ENCODE measurements at regions of chr17 and their contacts with region 1.

Region 1: DNA sequence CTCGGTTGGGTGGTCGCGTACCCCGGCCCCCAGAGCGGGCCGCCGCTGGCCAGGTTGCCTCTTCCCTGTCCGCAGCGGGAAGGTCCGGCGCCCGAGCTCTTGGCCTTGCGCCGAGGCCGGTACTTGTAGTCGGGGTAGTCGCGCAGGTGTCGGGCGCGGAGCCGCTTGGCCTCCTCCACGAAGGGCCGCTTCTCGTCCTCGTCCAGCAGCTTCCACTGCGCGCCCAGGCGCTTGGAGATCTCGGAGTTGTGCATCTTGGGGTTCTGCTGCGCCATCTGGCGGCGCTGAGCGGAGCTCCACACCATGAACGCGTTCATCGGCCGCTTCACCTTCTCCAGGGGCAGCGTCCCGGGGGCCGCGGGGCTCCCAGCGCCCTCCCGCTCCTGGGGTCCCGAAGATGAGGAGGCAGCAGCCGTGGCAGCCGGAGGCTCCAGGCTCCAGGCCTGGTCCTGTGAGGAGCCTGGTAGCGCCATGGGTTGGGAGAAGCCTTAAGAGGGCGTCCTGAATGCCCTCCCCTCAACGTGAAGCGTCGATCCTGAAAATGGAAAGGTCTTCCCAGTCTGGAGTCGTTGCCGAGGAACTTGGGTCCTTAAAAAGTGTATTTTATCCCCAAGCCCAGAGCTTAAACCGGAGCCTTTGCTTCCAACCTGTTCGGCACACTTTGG is 558 bp downstream of the SOX15 start:
- DNase-seq: peak; percentile 72 to 88
- H3K4me3 ChIP-seq: peak overlapping the region; percentile 83
- H3K27ac ChIP-seq: peak overlapping the region; percentile 97
- H3K4me1 ChIP-seq: peaks cover 39% of the 10 kb centered on the region
- H3K27me3 ChIP-seq: no peaks in the 10 kb centered on the region
- CTCF ChIP-seq: peak; percentile 83

Region 2: GRCh38 chr17:7280519-7281429 is 308.6 kb before region 1 on chr17:
- CTCF ChIA-PET with region 1: no interaction called
- POLR2A ChIA-PET with region 1: no interaction called
- intact Hi-C with region 1: loop called (anchors 2 kb)
- DNase-seq: peak; percentile 74 to 91
- H3K4me3 ChIP-seq: peak overlapping the region; percentile 55
- H3K27ac ChIP-seq: peak overlapping the region; percentile 62
- H3K4me1 ChIP-seq: 0 out of 2 replicates have a peak, but pooled peaks cover 4% of the 10 kb centered on the region
- H3K27me3 ChIP-seq: no peaks in the 10 kb centered on the region
- CTCF ChIP-seq: peak; percentile 96

Region 3: GRCh38 chr17:7351665-7352501 is 237.5 kb before region 1 on chr17 and contains the start of gene KCTD11:
- CTCF ChIA-PET with region 1: no interaction called
- POLR2A ChIA-PET with region 1: no interaction called
- intact Hi-C with region 1: loop called (anchors 1 kb)
- DNase-seq: peak; percentile 92 to 99
- H3K4me3 ChIP-seq: peak within 1 kb of the TSS; percentile 86
- H3K27ac ChIP-seq: peak within 1 kb of the TSS; percentile 98
- H3K4me1 ChIP-seq: peaks cover 28% of the 10 kb centered on the region
- H3K27me3 ChIP-seq: no peaks in the 10 kb centered on the region
- CTCF ChIP-seq: no peak; the same call in 1 of the 2 replicates
- total RNA-seq, gene KCTD11: 16.4 and 18.3 TPM in 2 replicates

Region 4: DNA sequence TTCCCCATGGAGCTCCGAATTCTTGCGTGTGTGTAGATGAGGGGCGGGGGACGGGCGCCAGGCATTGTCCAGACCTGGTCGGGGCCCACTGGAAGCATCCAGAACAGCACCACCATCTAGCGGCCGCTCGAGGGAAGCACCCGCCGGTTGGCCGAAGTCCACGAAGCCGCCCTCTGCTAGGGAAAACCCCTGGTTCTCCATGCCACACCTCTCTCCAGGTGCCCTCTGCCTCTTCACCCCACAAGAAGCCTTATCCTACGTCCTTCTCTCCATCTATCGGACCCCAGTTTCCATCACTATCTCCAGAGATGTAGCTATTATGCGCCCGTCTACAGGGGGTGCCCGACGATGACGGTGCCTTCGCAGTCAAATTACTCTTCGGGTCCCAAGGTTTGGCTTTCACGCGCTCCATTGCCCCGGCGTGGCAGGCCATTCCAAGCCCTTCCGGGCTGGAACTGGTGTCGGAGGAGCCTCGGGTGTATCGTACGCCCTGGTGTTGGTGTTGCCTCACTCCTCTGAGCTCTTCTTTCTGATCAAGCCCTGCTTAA is 28.2 kb before region 1 on chr17:
- CTCF ChIA-PET with region 1: interaction called, 4 read pairs
- POLR2A ChIA-PET with region 1: no interaction called
- intact Hi-C with region 1: loop called (anchors 1 kb)
- DNase-seq: peak; percentile 62 to 93
- H3K4me3 ChIP-seq: peak overlapping the region; percentile 92
- H3K27ac ChIP-seq: peak overlapping the region; percentile 60
- H3K4me1 ChIP-seq: peaks cover 9% of the 10 kb centered on the region
- H3K27me3 ChIP-seq: no peaks in the 10 kb centered on the region
- CTCF ChIP-seq: peak; percentile 69

Region 5: DNA sequence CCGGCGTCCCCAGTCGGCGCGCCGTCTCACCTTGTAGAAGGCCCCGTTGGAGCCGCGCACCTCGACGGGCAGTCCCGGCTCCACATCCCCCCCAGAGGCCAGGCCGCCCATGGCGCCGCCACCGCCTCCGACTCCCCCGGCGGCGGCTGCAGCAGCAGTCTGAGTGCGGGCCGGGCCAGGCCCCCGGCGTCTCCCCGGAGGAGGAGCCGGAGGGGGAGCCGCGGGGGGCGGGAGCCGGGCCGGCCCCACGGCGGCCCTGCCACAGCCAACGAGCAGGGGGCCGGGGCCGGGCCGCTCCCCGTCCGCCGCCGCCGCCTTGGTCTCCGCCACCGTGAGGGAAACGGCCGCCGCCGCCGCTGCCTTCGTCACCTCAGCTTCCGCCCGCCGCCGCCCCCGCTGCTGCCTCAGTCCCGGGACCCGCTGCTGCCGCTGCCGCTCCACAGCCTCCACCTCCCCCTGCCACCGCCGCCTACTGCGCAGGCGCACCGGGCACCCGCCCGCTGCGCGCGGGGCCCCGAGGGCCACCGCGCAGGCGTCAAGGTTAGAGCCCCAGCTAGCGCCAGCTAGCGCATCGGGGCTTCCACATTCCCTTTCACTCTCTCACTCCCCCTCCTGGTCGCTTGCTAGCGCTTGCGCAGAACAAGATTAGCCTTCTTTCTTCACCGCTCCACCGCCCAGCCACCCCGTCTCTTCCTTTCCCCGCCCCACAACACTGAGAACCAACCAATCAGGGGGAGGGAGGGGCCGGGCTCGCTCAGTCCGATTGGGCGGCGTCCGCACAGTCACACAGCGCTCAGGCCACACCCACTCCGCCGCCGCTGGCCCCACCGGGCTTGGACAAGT is 25.3 kb after region 1 on chr17 and contains the start of gene FXR2:
- CTCF ChIA-PET with region 1: no interaction called
- POLR2A ChIA-PET with region 1: interaction called, 22 read pairs
- intact Hi-C with region 1: loop called (anchors 1 kb)
- DNase-seq: peak; percentile 94 to 100
- H3K4me3 ChIP-seq: peak within 1 kb of the TSS; percentile 89
- H3K27ac ChIP-seq: peak within 1 kb of the TSS; percentile 73
- H3K4me1 ChIP-seq: peaks cover 22% of the 10 kb centered on the region
- H3K27me3 ChIP-seq: no peaks in the 10 kb centered on the region
- CTCF ChIP-seq: peak; percentile 54; the same call in 1 of the 2 replicates
- total RNA-seq, gene FXR2: 61.5 and 63.7 TPM in 2 replicates